Caco-2 (cell line): ENCODE measurements at regions of chr5 and their contacts with region 1.

Region 1: DNA sequence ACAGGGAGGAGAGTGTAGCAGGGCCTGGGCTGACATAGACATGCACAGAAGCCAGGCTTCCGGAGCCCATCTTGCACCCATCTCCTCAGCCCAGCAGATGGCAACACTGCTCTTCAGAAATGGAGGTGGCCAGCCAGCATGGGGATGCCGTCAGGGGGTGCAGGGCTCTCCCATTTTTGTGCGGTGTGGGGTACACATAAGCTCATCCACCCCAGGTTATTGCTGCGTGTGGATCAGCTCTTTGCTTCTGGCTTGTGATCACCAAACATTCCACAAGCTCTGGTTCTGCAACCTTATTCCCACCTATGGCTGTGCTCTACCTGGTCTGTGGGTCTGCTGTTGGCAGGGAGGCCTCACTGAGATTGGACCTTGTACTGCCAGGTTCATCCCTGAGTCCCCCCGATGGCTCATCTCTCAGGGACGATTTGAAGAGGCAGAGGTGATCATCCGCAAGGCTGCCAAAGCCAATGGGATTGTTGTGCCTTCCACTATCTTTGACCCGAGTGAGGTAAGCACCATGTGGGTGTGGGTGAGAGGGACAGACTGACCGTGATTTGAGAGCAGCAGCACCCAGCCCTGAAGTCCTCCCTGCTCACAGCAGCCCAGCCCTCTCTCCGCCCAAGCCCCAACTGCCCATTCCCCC is 17.3 kb downstream of the SLC22A5 start:
- DNase-seq: peak; percentile 65
- H3K4me3 ChIP-seq: no peak overlapping the region
- H3K4me3 Mint-ChIP-seq: no peak overlapping the region
- H3K27ac Mint-ChIP-seq: no peak overlapping the region
- H3K4me1 ChIP-seq: peaks cover 29% of the 10 kb centered on the region
- H3K4me1 Mint-ChIP-seq: no peaks in the 10 kb centered on the region
- H3K27me3 ChIP-seq: no peaks in the 10 kb centered on the region
- H3K27me3 Mint-ChIP-seq: no peaks in the 10 kb centered on the region
- CTCF ChIP-seq: peak; percentile 69 to 73

Region 2: GRCh38 chr5:132813599-132814502 is 427.1 kb after region 1 on chr5:
- CTCF ChIA-PET with region 1: no interaction called
- POLR2A ChIA-PET with region 1: no interaction called
- intact Hi-C with region 1: loop called (anchors 10 kb)
- DNase-seq: peak in 1 of 2 experiments; percentile 59
- H3K4me3 ChIP-seq: peak overlapping the region; percentile 44
- H3K4me3 Mint-ChIP-seq: peak overlapping the region; percentile 76
- H3K27ac Mint-ChIP-seq: no peak overlapping the region
- H3K4me1 ChIP-seq: peaks cover 6% of the 10 kb centered on the region
- H3K4me1 Mint-ChIP-seq: peaks cover 6% of the 10 kb centered on the region
- H3K27me3 ChIP-seq: no peaks in the 10 kb centered on the region
- H3K27me3 Mint-ChIP-seq: no peaks in the 10 kb centered on the region
- CTCF ChIP-seq: no peak